Gastrocnemius medialis (tissue), 4 donors: ENCODE measurements at regions of chr17 and their contacts with region 1.

Region 1: DNA sequence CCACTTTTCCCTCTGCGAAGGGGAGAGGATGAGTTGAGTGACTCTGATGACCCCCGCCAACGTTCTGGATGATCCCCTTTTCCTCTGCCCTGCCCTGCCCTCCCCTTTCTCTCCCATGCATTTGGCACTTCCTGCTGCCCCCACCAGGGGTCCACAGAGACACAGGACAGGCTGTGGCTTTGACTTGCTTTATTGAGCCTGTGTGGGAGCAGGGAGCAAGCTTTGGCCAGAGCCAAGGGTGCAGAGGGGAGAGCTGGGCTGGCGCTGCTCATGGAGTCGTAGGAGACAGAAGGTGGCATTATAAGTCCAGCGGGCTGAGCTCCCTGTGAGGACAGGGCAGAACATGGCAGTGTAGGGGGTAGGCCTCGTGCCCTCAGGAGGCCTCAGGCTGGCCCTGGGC is 1.6 kb downstream of the PPY start:
- DNase-seq: no peak
- ATAC-seq: no peak
- H3K4me3 ChIP-seq: no peak overlapping the region
- H3K27ac ChIP-seq: no peak overlapping the region
- H3K4me1 ChIP-seq: peaks cover 0 to 7% of the 10 kb centered on the region in 2 donors
- H3K27me3 ChIP-seq: peaks cover 10 to 13% (median 13%) of the 10 kb centered on the region in 3 donors
- CTCF ChIP-seq: no peak
- POLR2A ChIP-seq: no peak

Region 2: DNA sequence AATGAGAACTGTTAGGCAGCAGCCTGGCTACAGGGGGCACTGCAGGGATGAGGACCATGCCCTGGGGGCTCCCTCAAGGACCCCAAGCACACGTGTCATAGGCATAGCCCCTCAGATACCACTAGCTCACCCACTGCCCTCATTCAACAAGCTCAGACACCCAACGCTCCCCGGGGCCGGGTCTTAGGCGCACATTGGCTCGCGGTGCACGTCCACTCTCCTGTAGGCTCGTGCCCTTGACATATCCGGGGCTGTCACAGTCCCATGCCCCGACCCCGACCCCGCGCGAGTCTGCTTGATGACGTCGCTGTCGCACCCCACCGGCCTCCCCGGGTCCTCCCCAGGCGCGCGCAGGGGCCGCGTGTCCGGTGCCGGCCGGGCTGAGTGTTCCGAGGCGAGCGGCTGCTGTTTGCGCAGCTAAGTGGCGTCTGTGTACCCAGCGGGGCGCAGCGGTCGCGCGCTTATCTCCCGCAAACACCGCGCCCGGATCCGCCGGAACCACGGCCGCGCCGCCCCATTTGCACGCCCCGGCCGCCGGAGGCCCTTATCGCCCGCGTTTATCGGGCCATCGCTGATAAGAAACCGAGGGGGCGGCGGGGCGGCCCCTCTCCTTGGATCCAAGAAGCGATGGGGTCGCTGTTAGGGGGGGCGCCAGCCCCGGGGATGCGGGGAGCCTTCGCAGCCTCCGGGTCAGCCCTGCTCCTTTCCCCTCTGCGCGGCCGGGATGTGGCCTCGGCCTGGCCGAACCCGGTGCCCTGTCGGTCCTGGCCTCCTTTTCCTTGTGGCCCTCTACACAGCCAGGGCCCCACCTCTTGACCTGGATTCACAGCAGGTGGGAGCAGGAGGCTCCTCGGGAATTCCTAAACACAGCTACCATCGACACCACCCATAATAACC is 43.1 kb after region 1 on chr17:
- in situ Hi-C with region 1: no loop called
- intact Hi-C with region 1: no loop called
- DNase-seq: no peak
- ATAC-seq: no peak
- H3K4me3 ChIP-seq: peak overlapping the region; percentile 44 to 63 (median 52)
- H3K27ac ChIP-seq: no peak overlapping the region
- H3K4me1 ChIP-seq: peaks cover 15 to 20% of the 10 kb centered on the region in 2 donors
- H3K27me3 ChIP-seq: peaks cover 12 to 37% (median 14%) of the 10 kb centered on the region in 3 donors
- CTCF ChIP-seq: peak in 1 of 5 experiments; percentile 11
- POLR2A ChIP-seq: no peak

Region 3: DNA sequence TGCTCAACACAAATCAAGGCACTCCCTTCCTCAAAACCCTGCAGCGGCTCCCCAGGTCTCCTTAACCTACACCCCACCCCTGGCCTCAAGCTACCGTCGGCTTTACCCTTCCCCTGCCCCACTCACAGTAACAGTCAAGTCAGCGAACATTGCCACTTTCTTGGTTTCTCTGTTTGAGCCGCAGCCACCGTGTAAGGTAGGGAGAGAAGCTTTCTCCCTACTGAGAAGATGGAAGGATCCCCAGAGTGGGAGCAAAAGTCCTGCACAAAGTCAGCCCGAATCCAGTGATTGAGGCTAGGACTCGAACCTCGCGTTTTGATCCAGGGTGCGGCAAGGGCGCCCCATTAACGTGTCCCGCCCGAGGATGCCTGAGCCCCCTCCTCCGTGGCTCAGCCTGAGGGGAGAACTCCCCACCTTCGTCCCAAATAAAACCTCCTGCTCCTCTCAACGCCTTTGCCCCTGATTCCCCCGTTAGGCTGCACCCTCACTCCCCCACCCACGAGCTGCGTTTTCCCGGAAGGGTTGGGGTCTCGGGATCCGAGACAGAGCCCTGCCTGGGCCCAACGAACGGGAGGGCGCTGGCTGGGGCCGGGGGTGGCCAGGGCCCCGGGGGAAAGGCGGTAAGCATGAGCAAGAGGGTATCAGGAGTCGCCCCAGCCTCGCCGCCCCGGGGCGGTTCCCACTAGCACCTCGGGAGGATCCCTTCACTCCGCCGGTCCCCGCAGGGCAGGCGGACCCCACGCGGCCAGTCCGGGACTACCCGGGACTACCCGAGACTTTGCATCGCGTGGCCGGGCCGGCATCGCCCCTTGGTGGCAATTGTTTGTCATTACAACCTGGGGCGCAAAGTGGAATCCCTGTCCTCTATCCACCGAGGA is 53.9 kb after region 1 on chr17:
- in situ Hi-C with region 1: loop called (anchors 5 to 10 kb)
- intact Hi-C with region 1: loop called (anchors 1 kb)
- DNase-seq: peak; percentile 34 to 44
- ATAC-seq: peak; percentile 81 to 86
- H3K4me3 ChIP-seq: peak overlapping the region; percentile 18 to 46 (median 35)
- H3K27ac ChIP-seq: no peak overlapping the region
- H3K4me1 ChIP-seq: peaks cover 3 to 8% of the 10 kb centered on the region in 2 donors
- H3K27me3 ChIP-seq: peaks cover 6 to 9% (median 9%) of the 10 kb centered on the region in 3 donors
- CTCF ChIP-seq: peak; percentile 81 to 91 (median 88)
- POLR2A ChIP-seq: no peak

Region 4: GRCh38 chr17:44044067-44044466 is 103.4 kb after region 1 on chr17:
- in situ Hi-C with region 1: loop called in 3 of 4 experiments (anchors 5 to 10 kb)
- intact Hi-C with region 1: loop called (anchors 1 kb)
- DNase-seq: no peak
- ATAC-seq: no peak
- H3K4me3 ChIP-seq: no peak overlapping the region
- H3K27ac ChIP-seq: peak overlapping the region in 3 of 4 donors; percentile 31 to 40 (median 40)
- H3K4me1 ChIP-seq: peaks cover 27 to 30% of the 10 kb centered on the region in 2 donors
- H3K27me3 ChIP-seq: no peaks in the 10 kb centered on the region
- CTCF ChIP-seq: no peak
- POLR2A ChIP-seq: no peak